Right ventricle myocardium superior (tissue), 1 donor: ENCODE measurements at regions of chr21 and their contacts with region 1.

Region 1: GRCh38 chr21:45554477-45555175 is 12.4 kb upstream of the SLC19A1 start:
- DNase-seq: peak; percentile 91
- ATAC-seq: peak; percentile 87

Region 2: GRCh38 chr21:45590246-45590725 is 35.7 kb after region 1 on chr21:
- intact Hi-C with region 1: loop called (anchors 5 kb)
- DNase-seq: peak; percentile 82
- ATAC-seq: peak; percentile 94

Region 3: DNA sequence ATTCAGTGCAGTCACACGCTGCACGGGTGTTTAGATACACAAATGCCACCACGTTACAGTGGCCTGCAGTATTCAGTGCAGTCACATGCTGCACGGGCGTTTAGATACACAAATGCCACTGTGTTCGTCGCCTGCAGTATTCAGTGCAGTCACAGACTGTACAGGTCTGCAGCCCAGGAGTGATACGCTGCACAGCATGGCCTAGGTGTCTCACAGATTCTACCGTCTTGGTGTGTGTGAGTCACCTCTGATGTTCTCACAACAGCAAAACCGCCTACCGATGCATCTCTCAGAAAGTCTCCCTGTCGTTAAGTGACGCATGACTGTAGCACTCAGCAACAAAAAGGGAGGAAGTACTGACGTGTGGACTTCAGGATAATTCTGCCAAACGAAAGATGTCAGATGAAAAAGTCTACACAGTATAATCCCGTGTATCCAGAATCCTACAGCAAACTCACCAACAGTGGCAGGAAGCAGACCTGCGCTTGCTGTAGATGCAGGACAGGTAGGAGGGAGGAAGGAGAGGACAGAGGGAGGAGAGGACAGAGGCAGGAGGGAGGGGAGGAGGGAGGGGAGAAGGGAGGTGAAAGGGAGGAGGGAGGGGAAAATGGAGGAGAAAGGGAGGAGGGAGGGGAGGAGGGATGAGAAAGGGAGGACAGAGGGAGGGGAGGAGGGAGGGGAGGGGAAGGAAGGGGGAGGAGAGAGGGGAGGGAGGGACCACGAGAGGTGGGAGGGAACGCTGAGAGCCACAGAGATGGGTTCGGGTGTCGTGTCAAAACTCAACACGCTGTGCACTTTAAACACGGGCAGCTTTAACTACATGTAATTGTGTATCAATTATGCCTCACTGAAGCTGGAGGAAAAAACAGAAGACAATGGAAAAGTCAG is 52.6 kb after region 1 on chr21:
- intact Hi-C with region 1: no loop called
- DNase-seq: no peak
- ATAC-seq: no peak

Region 4: GRCh38 chr21:45670731-45671130 is 116.1 kb after region 1 on chr21:
- intact Hi-C with region 1: no loop called
- DNase-seq: no peak
- ATAC-seq: no peak

Region 5: GRCh38 chr21:45820171-45821091 is 265.8 kb after region 1 on chr21:
- intact Hi-C with region 1: loop called (anchors 5 kb)
- DNase-seq: peak; percentile 86
- ATAC-seq: peak; percentile 93

Region 6: GRCh38 chr21:45923146-45923545 is 368.5 kb after region 1 on chr21:
- intact Hi-C with region 1: loop called (anchors 10 kb)
- DNase-seq: peak; percentile 86
- ATAC-seq: peak; percentile 97